ENCODE measurements at regions of chr7 and their contacts with region 1.

Region 1: DNA sequence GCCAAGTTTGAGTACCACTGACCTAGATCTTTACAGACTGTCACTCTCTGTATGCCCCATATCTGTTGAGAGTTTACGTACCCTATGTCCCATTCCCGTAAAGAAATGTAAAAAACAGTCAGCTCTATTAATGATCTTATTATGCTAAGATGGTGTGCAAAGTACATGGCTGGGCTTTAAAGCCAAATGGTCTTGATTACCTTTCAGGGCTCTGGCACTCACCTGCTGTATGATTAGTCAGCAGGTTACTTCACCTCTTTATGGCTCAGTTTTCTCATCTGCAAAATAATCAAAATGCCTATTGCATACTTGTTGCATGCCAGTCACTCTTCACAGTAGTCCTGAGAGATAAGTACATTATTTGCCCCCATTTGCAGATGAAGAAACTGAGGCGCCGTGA is 54.2 kb downstream of the LHFPL3 start:
- DNase-seq: no peak
- H3K4me3 ChIP-seq: no peak overlapping the region
- H3K27ac ChIP-seq: no peak overlapping the region
- H3K4me1 ChIP-seq: no peaks in the 10 kb centered on the region
- H3K27me3 ChIP-seq: no peaks in the 10 kb centered on the region
- CTCF ChIP-seq: no peak
- EP300 ChIP-seq: no peak
- POLR2A ChIP-seq: no peak

Region 2: GRCh38 chr7:104664653-104665052 is 282.0 kb after region 1 on chr7:
- in situ Hi-C with region 1: no loop called
- intact Hi-C with region 1: loop called (anchors 5 kb)
- DNase-seq: no peak
- H3K4me3 ChIP-seq: no peak overlapping the region
- H3K27ac ChIP-seq: no peak overlapping the region
- H3K4me1 ChIP-seq: no peaks in the 10 kb centered on the region
- H3K27me3 ChIP-seq: no peaks in the 10 kb centered on the region
- CTCF ChIP-seq: no peak
- EP300 ChIP-seq: no peak
- POLR2A ChIP-seq: no peak